PC-9 (cell line): ENCODE measurements at regions of chr10 and their contacts with region 1.

Region 1: DNA sequence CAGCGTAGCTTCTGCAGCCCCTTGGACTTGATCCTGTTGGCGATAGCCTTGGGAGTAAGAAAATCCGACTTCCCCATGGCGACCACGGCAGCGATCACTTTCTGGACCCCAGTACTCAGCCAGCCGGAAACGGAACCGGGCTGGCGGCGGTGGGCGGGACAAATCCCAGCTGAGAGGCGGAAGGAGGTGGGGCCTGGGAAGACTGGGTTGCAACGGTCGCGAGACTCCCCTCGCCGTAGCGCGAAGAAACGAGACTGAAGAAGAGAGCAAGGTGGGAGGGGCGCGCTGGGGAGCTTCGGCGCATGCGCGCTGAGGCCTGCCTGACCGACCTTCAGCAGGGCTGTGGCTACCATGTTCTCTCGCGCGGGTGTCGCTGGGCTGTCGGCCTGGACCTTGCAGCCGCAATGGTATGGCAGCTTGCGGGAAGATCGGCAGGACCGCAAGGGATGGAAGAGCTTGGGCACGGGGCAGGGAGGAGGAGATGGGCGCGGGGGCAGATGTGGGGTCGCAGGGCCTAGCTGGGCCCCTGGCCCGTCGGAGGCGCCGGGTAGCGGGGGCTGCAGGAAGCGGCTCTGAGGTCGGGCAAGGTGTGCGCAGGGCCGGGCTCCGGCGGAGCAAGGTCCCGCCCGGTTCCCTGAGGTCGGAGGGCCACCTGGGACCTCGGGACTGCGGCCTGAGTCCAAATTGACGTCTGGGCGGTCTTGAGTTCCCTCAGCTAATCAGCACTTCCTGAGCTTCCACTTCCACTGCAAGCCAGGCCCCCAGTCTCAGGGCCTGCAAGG is at the starts of genes ATP5F1C and KIN:
- DNase-seq: peak; percentile 80 to 95
- H3K4me3 ChIP-seq: peak within 1 kb of the TSS; percentile 80
- H3K27ac ChIP-seq: peak within 1 kb of the TSS; percentile 12; the same call in 1 of the 2 replicates
- H3K4me1 ChIP-seq: peaks cover 10% of the 10 kb centered on the region
- H3K27me3 ChIP-seq: no peaks in the 10 kb centered on the region
- CTCF ChIP-seq: no peak
- total RNA-seq, gene ATP5F1C: 282 and 284 TPM in 2 replicates
- total RNA-seq, gene KIN: 7.5 and 10.4 TPM in 2 replicates

Region 2: DNA sequence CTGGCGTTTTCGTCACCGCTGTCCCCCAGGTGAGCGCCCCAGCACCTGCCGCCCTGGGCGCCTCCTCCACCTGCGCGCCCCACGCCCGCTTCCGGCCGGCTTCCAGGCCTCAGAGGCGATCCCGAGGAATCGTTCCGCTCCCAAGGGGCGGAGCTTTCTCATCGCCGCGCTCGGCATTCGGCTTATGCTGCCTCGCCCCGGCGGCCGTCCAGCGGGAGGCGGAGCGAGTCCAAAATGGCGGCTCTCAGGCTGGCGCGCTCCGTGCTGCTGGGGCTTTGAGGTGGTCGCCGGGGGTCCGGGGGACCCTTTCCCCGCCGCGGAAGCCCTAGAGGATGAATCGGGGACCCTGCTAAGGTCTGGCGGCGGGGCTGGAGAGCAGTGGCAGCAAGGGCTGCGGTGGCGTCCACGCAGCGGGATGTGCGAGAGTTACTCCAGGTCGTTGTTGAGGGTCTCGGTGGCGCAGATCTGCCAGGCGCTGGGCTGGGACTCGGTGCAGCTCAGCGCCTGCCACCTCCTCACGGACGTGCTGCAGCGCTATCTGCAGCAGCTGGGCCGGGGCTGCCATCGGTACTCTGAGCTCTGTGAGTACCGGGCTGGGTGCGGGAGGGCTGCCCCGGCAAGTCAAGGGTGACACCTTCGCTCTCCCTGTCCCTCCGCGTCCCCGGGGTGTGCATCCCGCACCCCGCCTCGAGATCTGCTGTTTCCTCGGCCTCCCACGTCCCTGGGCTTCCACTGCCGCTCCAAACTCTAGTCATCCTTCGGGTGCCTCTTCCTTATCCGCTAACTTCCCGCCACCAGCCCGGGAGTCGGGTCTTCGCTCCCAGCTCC is 30.5 kb after region 1 on chr10 and contains the start of gene TAF3:
- CTCF ChIA-PET with region 1: no interaction called
- POLR2A ChIA-PET with region 1: interaction called, 19 read pairs
- intact Hi-C with region 1: loop called (anchors 1 kb)
- DNase-seq: peak; percentile 76 to 93
- H3K4me3 ChIP-seq: peak within 1 kb of the TSS; percentile 82
- H3K27ac ChIP-seq: peak within 1 kb of the TSS; percentile 78
- H3K4me1 ChIP-seq: peaks cover 14% of the 10 kb centered on the region; the same call in 1 of the 2 replicates
- H3K27me3 ChIP-seq: no peaks in the 10 kb centered on the region
- CTCF ChIP-seq: no peak
- total RNA-seq, gene TAF3: 7.2 and 7.7 TPM in 2 replicates

Region 3: GRCh38 chr10:7945469-7946192 is 157.6 kb after region 1 on chr10:
- CTCF ChIA-PET with region 1: no interaction called
- POLR2A ChIA-PET with region 1: interaction called, 18 read pairs
- intact Hi-C with region 1: no loop called
- DNase-seq: no peak
- H3K4me3 ChIP-seq: no peak overlapping the region
- H3K27ac ChIP-seq: no peak overlapping the region
- H3K4me1 ChIP-seq: peaks cover 4% of the 10 kb centered on the region; the same call in 1 of the 2 replicates
- H3K27me3 ChIP-seq: no peaks in the 10 kb centered on the region
- CTCF ChIP-seq: no peak